ENCODE measurements at regions of chr1 and their contacts with region 1.

Region 1: GRCh38 chr1:154558575-154559465 is at the start of gene UBE2Q1:
- DNase-seq: peak; percentile 100
- ATAC-seq: peak; percentile 84
- H3K4me3 ChIP-seq: peak within 1 kb of the TSS; percentile 69 to 90 (median 81)
- H3K4me3 Mint-ChIP-seq: peak within 1 kb of the TSS; percentile 96
- H3K27ac ChIP-seq: peak within 1 kb of the TSS; percentile 85
- H3K27ac Mint-ChIP-seq: peak within 1 kb of the TSS; percentile 95
- H3K4me1 ChIP-seq: peaks cover 18 to 29% of the 10 kb centered on the region in 2 donors
- H3K4me1 Mint-ChIP-seq: peaks cover 33% of the 10 kb centered on the region
- H3K27me3 ChIP-seq: no peaks in the 10 kb centered on the region
- H3K27me3 Mint-ChIP-seq: no peaks in the 10 kb centered on the region
- CTCF ChIP-seq: no peak
- total RNA-seq, gene UBE2Q1: 97.9 and 108 TPM in 2 replicates

Region 2: GRCh38 chr1:154324669-154325582 is 233.9 kb before region 1 on chr1 and contains the start of gene ATP8B2:
- CTCF ChIA-PET with region 1: no interaction called
- POLR2A ChIA-PET with region 1: no interaction called
- intact Hi-C with region 1: loop called (anchors 2 kb)
- DNase-seq: peak; percentile 89
- ATAC-seq: peak; percentile 68
- H3K4me3 ChIP-seq: peak within 1 kb of the TSS; percentile 57 to 90 (median 87)
- H3K4me3 Mint-ChIP-seq: peak within 1 kb of the TSS; percentile 93
- H3K27ac ChIP-seq: peak within 1 kb of the TSS; percentile 48 to 67
- H3K27ac Mint-ChIP-seq: peak within 1 kb of the TSS; percentile 89
- H3K4me1 ChIP-seq: peaks cover 30 to 46% of the 10 kb centered on the region in 2 donors
- H3K4me1 Mint-ChIP-seq: peaks cover 42% of the 10 kb centered on the region
- H3K27me3 ChIP-seq: peaks cover 0 to 18% (median 3%) of the 10 kb centered on the region in 4 experiments
- H3K27me3 Mint-ChIP-seq: peaks cover 15% of the 10 kb centered on the region
- CTCF ChIP-seq: peak; percentile 92
- total RNA-seq, gene ATP8B2: 31.1 and 32.4 TPM in 2 replicates

Region 3: DNA sequence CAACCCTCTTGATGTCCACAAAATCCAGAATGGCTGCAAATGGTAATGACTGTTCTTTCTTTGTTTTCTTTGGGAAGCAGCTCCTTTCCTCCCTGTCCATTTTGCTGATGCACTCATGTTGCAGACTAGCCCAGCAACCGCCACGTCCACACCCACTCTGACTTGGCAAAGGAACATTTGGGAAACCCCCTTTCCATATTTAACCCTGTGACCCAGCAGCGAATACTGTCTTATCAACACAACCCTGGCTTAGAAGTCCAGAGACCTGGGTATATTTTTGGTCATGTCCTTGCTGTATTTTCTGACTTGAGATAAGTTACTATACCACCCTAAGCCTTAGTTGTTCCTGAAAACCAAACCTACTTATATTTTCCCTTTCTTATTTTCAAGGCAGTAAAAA is 38.5 kb before region 1 on chr1:
- CTCF ChIA-PET with region 1: no interaction called
- POLR2A ChIA-PET with region 1: no interaction called
- intact Hi-C with region 1: no loop called
- DNase-seq: no peak
- ATAC-seq: no peak
- H3K4me3 ChIP-seq: no peak overlapping the region
- H3K4me3 Mint-ChIP-seq: no peak overlapping the region
- H3K27ac ChIP-seq: no peak overlapping the region
- H3K27ac Mint-ChIP-seq: no peak overlapping the region
- H3K4me1 ChIP-seq: no peaks in the 10 kb centered on the region
- H3K4me1 Mint-ChIP-seq: no peaks in the 10 kb centered on the region
- H3K27me3 ChIP-seq: peaks cover 0 to 12% (median 3%) of the 10 kb centered on the region in 4 experiments
- H3K27me3 Mint-ChIP-seq: peaks cover 37% of the 10 kb centered on the region
- CTCF ChIP-seq: no peak

Region 4: GRCh38 chr1:154607609-154608396 is 49.0 kb after region 1 on chr1 and contains the start of gene ADAR:
- CTCF ChIA-PET with region 1: interaction called, 6 read pairs
- POLR2A ChIA-PET with region 1: interaction called, 13 read pairs
- intact Hi-C with region 1: loop called (anchors 1 kb)
- DNase-seq: peak; percentile 96
- ATAC-seq: peak; percentile 92
- H3K4me3 ChIP-seq: peak within 1 kb of the TSS; percentile 83 to 96 (median 93)
- H3K4me3 Mint-ChIP-seq: peak within 1 kb of the TSS; percentile 98
- H3K27ac ChIP-seq: peak within 1 kb of the TSS; percentile 86 to 97
- H3K27ac Mint-ChIP-seq: peak within 1 kb of the TSS; percentile 96
- H3K4me1 ChIP-seq: peaks cover 50 to 60% of the 10 kb centered on the region in 2 donors
- H3K4me1 Mint-ChIP-seq: peaks cover 61% of the 10 kb centered on the region
- H3K27me3 ChIP-seq: no peaks in the 10 kb centered on the region
- H3K27me3 Mint-ChIP-seq: no peaks in the 10 kb centered on the region
- CTCF ChIP-seq: no peak
- total RNA-seq, gene ADAR: 221 and 241 TPM in 2 replicates

Region 5: GRCh38 chr1:154870115-154870571 is 311.3 kb after region 1 on chr1 and contains the start of gene KCNN3:
- CTCF ChIA-PET with region 1: interaction called, 13 read pairs
- POLR2A ChIA-PET with region 1: no interaction called
- intact Hi-C with region 1: loop called (anchors 1 kb)
- DNase-seq: peak; percentile 89
- ATAC-seq: peak; percentile 100
- H3K4me3 ChIP-seq: peak within 1 kb of the TSS in 1 of 5 experiments; percentile 21
- H3K4me3 Mint-ChIP-seq: peak within 1 kb of the TSS; percentile 71
- H3K27ac ChIP-seq: no peak within 1 kb of the TSS
- H3K27ac Mint-ChIP-seq: no peak within 1 kb of the TSS
- H3K4me1 ChIP-seq: peaks cover 35 to 42% of the 10 kb centered on the region in 2 donors
- H3K4me1 Mint-ChIP-seq: peaks cover 48% of the 10 kb centered on the region
- H3K27me3 ChIP-seq: peaks cover 0 to 34% (median 18%) of the 10 kb centered on the region in 4 experiments
- H3K27me3 Mint-ChIP-seq: peaks cover 43% of the 10 kb centered on the region
- CTCF ChIP-seq: no peak
- total RNA-seq, gene KCNN3: 0.17 and 0.29 TPM in 2 replicates

Region 6: GRCh38 chr1:155001675-155002463 is 443.0 kb after region 1 on chr1:
- CTCF ChIA-PET with region 1: no interaction called
- POLR2A ChIA-PET with region 1: no interaction called
- intact Hi-C with region 1: loop called (anchors 5 kb)
- DNase-seq: peak; percentile 98
- ATAC-seq: peak; percentile 81
- H3K4me3 ChIP-seq: peak overlapping the region; percentile 74 to 95 (median 86)
- H3K4me3 Mint-ChIP-seq: peak overlapping the region; percentile 90
- H3K27ac ChIP-seq: peak overlapping the region; percentile 73 to 80
- H3K27ac Mint-ChIP-seq: peak overlapping the region; percentile 96
- H3K4me1 ChIP-seq: peaks cover 41 to 50% of the 10 kb centered on the region in 2 donors
- H3K4me1 Mint-ChIP-seq: peaks cover 51% of the 10 kb centered on the region
- H3K27me3 ChIP-seq: no peaks in the 10 kb centered on the region
- H3K27me3 Mint-ChIP-seq: no peaks in the 10 kb centered on the region
- CTCF ChIP-seq: no peak

Region 7: DNA sequence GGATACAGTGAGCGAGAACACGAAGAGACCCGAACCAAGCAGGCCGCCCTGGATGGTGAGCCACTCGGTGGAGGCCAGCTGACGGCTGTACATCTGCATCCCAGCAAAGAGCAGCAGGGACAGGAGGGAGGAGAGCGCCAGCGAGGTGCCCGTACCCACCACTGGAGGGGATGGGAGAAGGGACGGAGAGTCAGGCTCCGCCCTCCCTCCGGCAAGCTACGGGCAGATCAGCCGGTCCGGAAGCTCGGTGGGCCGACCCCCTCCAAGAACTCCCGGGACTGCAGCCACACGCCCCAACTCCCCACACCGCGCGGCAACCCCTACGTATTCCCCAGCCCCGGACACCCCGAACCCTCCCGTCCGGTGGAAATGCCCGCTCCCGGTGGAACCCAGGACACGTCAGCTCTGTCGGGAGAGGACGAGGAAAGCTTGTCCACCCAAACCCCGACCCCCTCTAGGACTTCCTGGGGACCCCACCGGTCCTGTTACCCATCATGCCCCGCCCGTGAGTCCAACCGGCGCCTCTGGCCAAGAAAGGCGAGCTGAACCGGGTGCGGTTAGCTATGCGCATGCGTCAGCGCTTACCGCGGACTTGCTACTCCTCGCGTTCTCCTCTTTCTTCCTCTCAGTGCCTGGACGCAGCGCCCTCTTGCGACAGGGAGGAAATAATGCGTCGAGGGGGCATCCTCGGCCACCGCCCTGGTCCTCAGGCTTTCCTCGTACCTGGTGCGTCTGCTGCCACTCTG is 614.1 kb after region 1 on chr1 and contains the start of gene KRTCAP2:
- CTCF ChIA-PET with region 1: no interaction called
- POLR2A ChIA-PET with region 1: no interaction called
- intact Hi-C with region 1: loop called (anchors 2 kb)
- DNase-seq: peak; percentile 95
- ATAC-seq: peak; percentile 85
- H3K4me3 ChIP-seq: peak within 1 kb of the TSS; percentile 27 to 95 (median 73)
- H3K4me3 Mint-ChIP-seq: peak within 1 kb of the TSS; percentile 97
- H3K27ac ChIP-seq: peak within 1 kb of the TSS; percentile 89 to 92
- H3K27ac Mint-ChIP-seq: peak within 1 kb of the TSS; percentile 98
- H3K4me1 ChIP-seq: peaks cover 24 to 35% of the 10 kb centered on the region in 2 donors
- H3K4me1 Mint-ChIP-seq: peaks cover 40% of the 10 kb centered on the region
- H3K27me3 ChIP-seq: no peaks in the 10 kb centered on the region
- H3K27me3 Mint-ChIP-seq: no peaks in the 10 kb centered on the region
- CTCF ChIP-seq: peak; percentile 89
- total RNA-seq, gene KRTCAP2: 136 and 151 TPM in 2 replicates